ENCODE measurements at regions of chr2 and their contacts with region 1.

Region 1: GRCh38 chr2:240060977-240061591 is 7.8 kb upstream of the OR6B3 start:
- DNase-seq: peak; percentile 20
- H3K4me3 ChIP-seq: no peak overlapping the region
- H3K27ac ChIP-seq: no peak overlapping the region
- H3K4me1 ChIP-seq: no peaks in the 10 kb centered on the region
- H3K27me3 ChIP-seq: peaks cover 16% of the 10 kb centered on the region
- CTCF ChIP-seq: peak; percentile 51 to 66 (median 53)
- EP300 ChIP-seq: no peak
- POLR2A ChIP-seq: no peak

Region 2: GRCh38 chr2:239806758-239807434 is 254.2 kb before region 1 on chr2:
- in situ Hi-C with region 1: no loop called
- intact Hi-C with region 1: no loop called
- DNase-seq: no peak
- H3K4me3 ChIP-seq: no peak overlapping the region
- H3K27ac ChIP-seq: no peak overlapping the region
- H3K4me1 ChIP-seq: no peaks in the 10 kb centered on the region
- H3K27me3 ChIP-seq: no peaks in the 10 kb centered on the region
- CTCF ChIP-seq: no peak
- EP300 ChIP-seq: no peak
- POLR2A ChIP-seq: no peak

Region 3: GRCh38 chr2:240136013-240136670 is 75.1 kb after region 1 on chr2 and contains the start of gene COPS9:
- in situ Hi-C with region 1: loop called in 2 of 4 experiments (anchors 5 to 10 kb)
- intact Hi-C with region 1: loop called (anchors 5 kb)
- DNase-seq: peak; percentile 88
- H3K4me3 ChIP-seq: peak within 1 kb of the TSS; percentile 69 to 100 (median 84)
- H3K27ac ChIP-seq: peak within 1 kb of the TSS; percentile 69 to 84 (median 74)
- H3K4me1 ChIP-seq: peaks cover 7 to 22% (median 12%) of the 10 kb centered on the region in 4 donors
- H3K27me3 ChIP-seq: no peaks in the 10 kb centered on the region
- CTCF ChIP-seq: no peak
- EP300 ChIP-seq: no peak
- POLR2A ChIP-seq: peak; percentile 58
- total RNA-seq, gene COPS9: 13.1 to 124 (median 72.1) TPM

Region 4: GRCh38 chr2:240143801-240144648 is 82.9 kb after region 1 on chr2:
- in situ Hi-C with region 1: loop called in 2 of 4 experiments (anchors 5 to 10 kb)
- intact Hi-C with region 1: loop called (anchors 5 kb)
- DNase-seq: peak; percentile 77
- H3K4me3 ChIP-seq: no peak overlapping the region
- H3K27ac ChIP-seq: no peak overlapping the region
- H3K4me1 ChIP-seq: peaks cover 0 to 3% (median 0%) of the 10 kb centered on the region in 4 donors
- H3K27me3 ChIP-seq: no peaks in the 10 kb centered on the region
- CTCF ChIP-seq: peak; percentile 88 to 96 (median 93)
- EP300 ChIP-seq: no peak
- POLR2A ChIP-seq: no peak

Measured in transverse colon (tissue), 4 donors.